CD4-positive, alpha-beta T cell (primary cell): ENCODE measurements at regions of chr7 and their contacts with region 1.

Region 1: DNA sequence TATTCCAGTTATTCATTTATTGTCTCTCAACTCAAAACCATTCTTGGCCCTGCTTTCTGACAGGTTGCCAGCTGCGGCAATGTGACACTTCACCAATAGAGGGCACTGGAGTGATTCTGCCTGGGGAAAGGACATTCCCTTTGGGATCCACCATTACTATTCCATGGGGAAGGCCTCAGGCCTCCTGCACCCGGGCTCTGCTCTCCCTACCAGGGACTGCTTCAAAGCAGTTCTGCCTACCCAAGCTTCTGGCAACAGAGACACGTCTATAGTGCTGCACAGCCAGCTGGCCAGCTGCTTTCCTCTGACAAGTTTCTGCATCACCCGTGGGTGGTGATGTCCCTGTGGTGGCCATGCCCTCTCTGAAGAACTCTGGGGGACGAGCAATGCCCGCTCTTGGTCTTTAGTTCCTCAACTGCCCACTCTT is 163.8 kb downstream of the ELMO1 start:
- DNase-seq: peak in 13 of 14 experiments; percentile 6 to 62 (median 31)
- ATAC-seq: peak; percentile 53
- H3K4me3 ChIP-seq: no peak overlapping the region
- H3K4me3 Mint-ChIP-seq: no peak overlapping the region
- H3K27ac ChIP-seq: no peak overlapping the region
- H3K27ac Mint-ChIP-seq: peak overlapping the region; percentile 75
- H3K4me1 ChIP-seq: peaks cover 19% of the 10 kb centered on the region
- H3K4me1 Mint-ChIP-seq: peaks cover 66% of the 10 kb centered on the region
- H3K27me3 ChIP-seq: no peaks in the 10 kb centered on the region
- H3K27me3 Mint-ChIP-seq: no peaks in the 10 kb centered on the region
- CTCF ChIP-seq: peak; percentile 88

Region 2: DNA sequence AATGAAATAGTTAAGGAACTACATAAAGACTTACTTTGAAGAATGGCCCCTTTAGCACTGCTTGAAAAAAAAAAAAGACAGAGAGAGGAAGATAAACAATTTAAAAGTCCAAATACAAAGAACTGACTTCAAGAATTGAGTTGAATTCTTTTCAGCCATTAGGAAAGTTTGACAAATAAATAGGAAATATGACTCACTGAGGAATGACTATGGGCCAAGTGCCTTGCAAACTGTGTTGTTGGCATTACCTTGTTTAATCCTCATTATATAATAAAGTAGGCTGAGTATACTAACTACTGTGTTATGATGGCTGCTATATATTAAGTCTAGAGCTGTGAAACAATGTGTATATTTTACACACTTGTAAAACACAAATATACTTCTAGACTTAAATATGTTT is 12.7 kb after region 1 on chr7:
- CTCF ChIA-PET with region 1: interaction called, 3 read pairs
- POLR2A ChIA-PET with region 1: no interaction called
- intact Hi-C with region 1: loop called in 1 of 2 experiments (anchors 2 kb)
- DNase-seq: no peak
- ATAC-seq: no peak
- H3K4me3 ChIP-seq: no peak overlapping the region
- H3K4me3 Mint-ChIP-seq: no peak overlapping the region
- H3K27ac ChIP-seq: no peak overlapping the region
- H3K27ac Mint-ChIP-seq: peak overlapping the region; percentile 28
- H3K4me1 ChIP-seq: no peaks in the 10 kb centered on the region
- H3K4me1 Mint-ChIP-seq: peaks cover 14% of the 10 kb centered on the region
- H3K27me3 ChIP-seq: no peaks in the 10 kb centered on the region
- H3K27me3 Mint-ChIP-seq: no peaks in the 10 kb centered on the region
- CTCF ChIP-seq: no peak

Region 3: GRCh38 chr7:37495574-37496184 is 210.9 kb after region 1 on chr7:
- CTCF ChIA-PET with region 1: interaction called, 12 read pairs
- POLR2A ChIA-PET with region 1: no interaction called
- intact Hi-C with region 1: loop called in 1 of 2 experiments (anchors 5 kb)
- DNase-seq: peak in 3 of 14 experiments; percentile 47 to 59 (median 51)
- ATAC-seq: peak; percentile 68
- H3K4me3 ChIP-seq: no peak overlapping the region
- H3K4me3 Mint-ChIP-seq: no peak overlapping the region
- H3K27ac ChIP-seq: no peak overlapping the region
- H3K27ac Mint-ChIP-seq: no peak overlapping the region
- H3K4me1 ChIP-seq: no peaks in the 10 kb centered on the region
- H3K4me1 Mint-ChIP-seq: no peaks in the 10 kb centered on the region
- H3K27me3 ChIP-seq: no peaks in the 10 kb centered on the region
- H3K27me3 Mint-ChIP-seq: no peaks in the 10 kb centered on the region
- CTCF ChIP-seq: peak; percentile 89